CD4-positive, alpha-beta memory T cell (primary cell): ENCODE measurements at regions of chr7 and their contacts with region 1.

Region 1: DNA sequence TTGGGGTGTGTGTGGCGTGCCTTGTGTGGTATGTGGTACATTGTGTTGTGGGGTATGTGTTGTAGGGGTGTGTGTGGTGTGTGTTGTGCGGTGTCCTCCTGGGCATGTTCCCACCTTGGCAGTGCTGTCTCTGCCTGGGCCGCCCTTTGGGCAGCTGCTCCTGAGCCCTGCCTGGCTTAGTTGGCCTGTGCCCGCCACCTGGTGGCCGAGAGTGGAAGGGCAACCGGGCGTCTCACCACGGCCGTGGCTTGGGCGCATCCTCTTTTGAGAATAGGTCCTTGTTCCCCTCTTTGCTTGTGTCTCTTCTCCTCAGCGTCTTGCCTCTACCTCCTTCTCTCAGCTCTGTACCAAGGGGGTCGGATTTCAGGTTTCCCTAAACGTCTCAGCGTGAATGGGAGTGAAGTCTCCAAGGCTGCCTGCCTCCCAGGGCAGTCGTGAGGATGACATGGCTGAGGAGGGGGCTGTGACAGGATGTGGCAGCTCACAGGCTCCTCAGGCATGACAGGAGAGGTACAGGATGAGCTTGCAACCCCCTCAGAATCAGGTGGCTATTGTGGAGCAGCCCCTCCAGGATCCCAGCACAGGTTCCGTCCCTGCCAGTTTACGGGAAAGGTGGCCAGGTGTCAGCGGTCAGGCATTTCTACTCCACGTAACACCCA is 98.4 kb upstream of the PODXL start:
- DNase-seq: peak; percentile 60 to 71 (median 68)
- H3K4me3 ChIP-seq: no peak overlapping the region
- H3K4me3 Mint-ChIP-seq: no peak overlapping the region
- H3K27ac ChIP-seq: no peak overlapping the region
- H3K27ac Mint-ChIP-seq: peak overlapping the region in 1 of 7 donors; percentile 57
- H3K4me1 ChIP-seq: no peaks in the 10 kb centered on the region
- H3K4me1 Mint-ChIP-seq: peaks cover 0 to 8% (median 5%) of the 10 kb centered on the region in 4 donors
- H3K27me3 ChIP-seq: no peaks in the 10 kb centered on the region
- H3K27me3 Mint-ChIP-seq: peaks cover 2 to 10% of the 10 kb centered on the region in 2 donors

Region 2: GRCh38 chr7:131507592-131508331 is 147.0 kb before region 1 on chr7:
- CTCF ChIA-PET with region 1: interaction called, 20 read pairs
- POLR2A ChIA-PET with region 1: no interaction called
- intact Hi-C with region 1: no loop called
- DNase-seq: peak; percentile 68 to 73 (median 72)
- H3K4me3 ChIP-seq: no peak overlapping the region
- H3K4me3 Mint-ChIP-seq: peak overlapping the region in 4 of 8 donors; percentile 33 to 61 (median 44)
- H3K27ac ChIP-seq: no peak overlapping the region
- H3K27ac Mint-ChIP-seq: peak overlapping the region in 1 of 7 donors; percentile 64
- H3K4me1 ChIP-seq: peaks cover 5% of the 10 kb centered on the region
- H3K4me1 Mint-ChIP-seq: peaks cover 14 to 21% (median 16%) of the 10 kb centered on the region in 4 donors
- H3K27me3 ChIP-seq: no peaks in the 10 kb centered on the region
- H3K27me3 Mint-ChIP-seq: no peaks in the 10 kb centered on the region

Region 3: GRCh38 chr7:131546583-131547111 is 108.2 kb before region 1 on chr7:
- CTCF ChIA-PET with region 1: interaction called, 5 read pairs
- POLR2A ChIA-PET with region 1: no interaction called
- intact Hi-C with region 1: loop called (anchors 5 kb)
- DNase-seq: peak; percentile 25 to 53 (median 32)
- H3K4me3 ChIP-seq: no peak overlapping the region
- H3K4me3 Mint-ChIP-seq: no peak overlapping the region
- H3K27ac ChIP-seq: no peak overlapping the region
- H3K27ac Mint-ChIP-seq: no peak overlapping the region
- H3K4me1 ChIP-seq: no peaks in the 10 kb centered on the region
- H3K4me1 Mint-ChIP-seq: peaks cover 0 to 8% (median 5%) of the 10 kb centered on the region in 4 donors
- H3K27me3 ChIP-seq: no peaks in the 10 kb centered on the region
- H3K27me3 Mint-ChIP-seq: peaks cover 0 to 3% of the 10 kb centered on the region in 2 donors